Activated CD4-positive, alpha-beta memory T cell treated with anti-CD3 and anti-CD28 coated beads for 36 hours (primary cell): ENCODE measurements at regions of chr1 and their contacts with region 1.

Region 1: DNA sequence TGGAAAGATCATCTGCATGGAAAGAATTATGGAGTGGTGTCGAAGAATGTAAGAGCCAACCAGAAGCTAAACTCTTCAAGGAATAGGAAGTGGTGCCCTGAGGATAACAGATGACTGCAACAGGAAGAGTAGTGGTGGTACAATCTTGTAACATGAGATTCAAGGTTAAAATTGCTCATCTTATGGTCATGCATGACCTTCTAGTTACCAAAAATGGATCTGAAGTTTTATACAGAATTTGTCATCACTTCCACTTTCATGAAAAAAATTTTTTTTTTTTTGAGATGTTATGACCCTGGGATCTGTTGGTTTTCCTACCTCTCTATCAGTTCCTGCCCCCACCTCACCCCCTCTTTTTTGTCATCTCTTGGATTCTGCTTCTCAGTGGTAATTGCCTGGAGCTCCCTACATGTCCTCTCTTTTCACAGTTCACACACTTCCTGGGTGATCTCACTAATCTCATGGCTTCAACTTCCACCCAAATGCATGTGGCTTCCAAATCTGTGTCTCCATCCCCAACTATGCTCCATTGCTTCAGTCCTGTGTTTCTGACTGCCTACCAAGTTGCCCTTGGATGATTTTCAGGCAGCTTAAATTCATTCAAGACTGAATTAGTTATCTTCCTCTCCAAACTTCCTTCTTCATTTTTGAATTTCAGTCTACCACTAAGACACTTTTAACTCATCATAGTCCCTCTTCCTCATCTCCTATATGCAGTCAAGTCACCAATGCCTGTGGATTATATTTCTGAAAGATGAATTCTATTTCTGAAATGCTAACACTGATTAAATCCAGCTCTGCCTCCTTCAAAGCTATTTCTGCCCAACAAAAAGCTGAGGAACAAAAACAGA is 48.4 kb downstream of the SLAMF6 start:
- DNase-seq: no peak
- H3K4me3 Mint-ChIP-seq: no peak overlapping the region
- H3K27ac Mint-ChIP-seq: no peak overlapping the region
- H3K4me1 Mint-ChIP-seq: peaks cover 6% of the 10 kb centered on the region
- H3K27me3 Mint-ChIP-seq: no peaks in the 10 kb centered on the region

Region 2: GRCh38 chr1:160428655-160429054 is 46.0 kb before region 1 on chr1:
- CTCF ChIA-PET with region 1: interaction called, 10 read pairs
- POLR2A ChIA-PET with region 1: no interaction called
- intact Hi-C with region 1: loop called (anchors 1 kb)
- DNase-seq: peak; percentile 57
- H3K4me3 Mint-ChIP-seq: no peak overlapping the region
- H3K27ac Mint-ChIP-seq: peak overlapping the region; percentile 77
- H3K4me1 Mint-ChIP-seq: peaks cover 60% of the 10 kb centered on the region
- H3K27me3 Mint-ChIP-seq: no peaks in the 10 kb centered on the region

Region 3: DNA sequence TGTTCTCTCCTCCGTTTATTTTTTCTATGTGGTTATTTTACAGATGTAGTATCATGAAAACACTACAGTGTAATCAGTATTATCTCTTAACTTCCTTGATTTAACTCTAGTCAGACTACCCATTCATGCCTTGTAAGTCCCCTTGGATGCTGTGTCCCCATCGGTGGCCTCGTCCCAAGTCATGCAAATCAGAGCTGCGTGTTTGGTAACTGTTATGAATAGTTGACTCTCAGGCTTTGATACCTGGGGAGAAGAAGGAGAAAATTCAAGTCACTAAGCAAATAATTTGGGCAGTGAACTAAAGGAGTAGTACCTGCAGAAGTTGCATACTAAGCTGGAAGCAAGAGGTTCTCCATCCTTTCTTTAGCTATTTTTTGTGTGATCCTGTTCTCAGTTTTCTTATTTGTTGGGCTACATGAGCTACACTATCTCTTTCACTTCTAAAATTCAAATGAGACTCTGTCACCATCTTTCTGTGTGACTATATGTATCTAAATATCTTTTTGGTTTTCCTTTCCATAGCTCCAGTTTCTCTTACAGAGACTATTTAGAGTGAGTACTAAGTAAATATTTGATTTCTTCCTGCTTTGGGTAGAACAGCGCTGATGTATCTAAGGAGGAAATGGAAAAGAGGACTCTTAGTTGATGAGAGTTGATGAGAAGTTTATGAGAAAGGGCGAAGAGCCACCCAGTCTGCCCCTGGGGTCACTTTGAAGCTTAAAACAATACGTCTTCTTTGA is 23.3 kb before region 1 on chr1:
- CTCF ChIA-PET with region 1: no interaction called
- POLR2A ChIA-PET with region 1: interaction called, 6 read pairs
- intact Hi-C with region 1: loop called (anchors 1 kb)
- DNase-seq: peak; percentile 45
- H3K4me3 Mint-ChIP-seq: peak overlapping the region; percentile 53
- H3K27ac Mint-ChIP-seq: peak overlapping the region; percentile 97
- H3K4me1 Mint-ChIP-seq: peaks cover 79% of the 10 kb centered on the region
- H3K27me3 Mint-ChIP-seq: no peaks in the 10 kb centered on the region

Region 4: DNA sequence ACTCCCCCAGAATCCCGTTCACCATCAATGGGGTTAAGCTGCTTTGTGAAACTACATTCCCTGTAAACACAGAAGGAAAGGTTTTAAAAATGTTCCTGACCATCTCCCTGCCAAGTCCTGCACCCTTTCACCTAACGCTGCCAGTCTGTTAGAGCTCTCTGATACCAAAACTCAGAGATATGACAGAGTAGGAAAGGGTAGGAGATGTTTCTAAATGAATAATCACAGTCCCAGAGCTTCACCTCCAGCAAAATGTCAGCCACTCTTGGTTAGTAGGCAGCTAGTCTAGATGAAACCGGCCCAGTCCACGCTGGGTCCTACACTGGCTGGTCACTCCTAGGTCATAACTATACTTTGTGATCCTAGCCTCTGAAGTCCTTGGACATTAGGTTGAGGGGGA is 21.7 kb after region 1 on chr1:
- CTCF ChIA-PET with region 1: no interaction called
- POLR2A ChIA-PET with region 1: no interaction called
- intact Hi-C with region 1: loop called (anchors 2 kb)
- DNase-seq: no peak
- H3K4me3 Mint-ChIP-seq: no peak overlapping the region
- H3K27ac Mint-ChIP-seq: peak overlapping the region; percentile 63
- H3K4me1 Mint-ChIP-seq: peaks cover 49% of the 10 kb centered on the region
- H3K27me3 Mint-ChIP-seq: no peaks in the 10 kb centered on the region

Region 5: GRCh38 chr1:160534823-160535605 is 60.4 kb after region 1 on chr1:
- CTCF ChIA-PET with region 1: no interaction called
- POLR2A ChIA-PET with region 1: no interaction called
- intact Hi-C with region 1: no loop called
- DNase-seq: no peak
- H3K4me3 Mint-ChIP-seq: no peak overlapping the region
- H3K27ac Mint-ChIP-seq: no peak overlapping the region
- H3K4me1 Mint-ChIP-seq: peaks cover 22% of the 10 kb centered on the region
- H3K27me3 Mint-ChIP-seq: no peaks in the 10 kb centered on the region